GM12878 (cell line): ENCODE measurements at regions of chr2 and their contacts with region 1.

Region 1: GRCh38 chr2:30711646-30712085 is 95.6 kb downstream of the CAPN13 start:
- DNase-seq: peak; percentile 59
- ATAC-seq: peak; percentile 72
- H3K4me3 ChIP-seq: no peak overlapping the region
- H3K27ac ChIP-seq: no peak overlapping the region
- H3K4me1 ChIP-seq: peaks cover 13% of the 10 kb centered on the region
- H3K27me3 ChIP-seq: no peaks in the 10 kb centered on the region
- CTCF ChIP-seq: peak; percentile 100; a peak in 5 of 6 replicates
- EP300 ChIP-seq: no peak
- POLR2A ChIP-seq: no peak
- RAD21 ChIP-seq: peak; percentile 96

Region 2: DNA sequence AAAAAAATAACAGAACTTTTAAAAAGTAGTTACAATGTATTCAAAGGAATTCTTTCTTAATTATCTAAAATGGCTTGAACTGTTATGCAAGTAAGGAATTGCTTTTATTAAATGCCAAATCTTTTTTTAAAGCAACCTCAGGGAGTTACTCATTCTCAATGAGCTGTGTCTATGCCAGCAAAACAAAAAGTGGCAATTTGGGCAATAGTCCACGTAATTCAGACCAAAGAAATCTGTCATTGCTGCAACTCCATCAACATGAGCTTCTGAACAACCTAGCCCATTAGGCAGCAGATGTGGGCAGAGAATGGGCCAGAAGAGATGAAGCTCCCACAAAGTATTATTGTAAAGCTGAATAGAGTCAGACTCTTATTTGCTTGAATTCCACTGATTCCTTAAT is 908.7 kb before region 1 on chr2:
- CTCF ChIA-PET with region 1: no interaction called
- POLR2A ChIA-PET with region 1: no interaction called
- RAD21 ChIA-PET with region 1: no interaction called
- SMC1A ChIA-PET with region 1: no interaction called
- in situ Hi-C with region 1: no loop called
- intact Hi-C with region 1: no loop called
- DNase-seq: no peak
- ATAC-seq: no peak
- H3K4me3 ChIP-seq: no peak overlapping the region
- H3K27ac ChIP-seq: no peak overlapping the region
- H3K4me1 ChIP-seq: no peaks in the 10 kb centered on the region
- H3K27me3 ChIP-seq: no peaks in the 10 kb centered on the region
- CTCF ChIP-seq: no peak
- EP300 ChIP-seq: no peak
- POLR2A ChIP-seq: no peak
- RAD21 ChIP-seq: no peak

Region 3: DNA sequence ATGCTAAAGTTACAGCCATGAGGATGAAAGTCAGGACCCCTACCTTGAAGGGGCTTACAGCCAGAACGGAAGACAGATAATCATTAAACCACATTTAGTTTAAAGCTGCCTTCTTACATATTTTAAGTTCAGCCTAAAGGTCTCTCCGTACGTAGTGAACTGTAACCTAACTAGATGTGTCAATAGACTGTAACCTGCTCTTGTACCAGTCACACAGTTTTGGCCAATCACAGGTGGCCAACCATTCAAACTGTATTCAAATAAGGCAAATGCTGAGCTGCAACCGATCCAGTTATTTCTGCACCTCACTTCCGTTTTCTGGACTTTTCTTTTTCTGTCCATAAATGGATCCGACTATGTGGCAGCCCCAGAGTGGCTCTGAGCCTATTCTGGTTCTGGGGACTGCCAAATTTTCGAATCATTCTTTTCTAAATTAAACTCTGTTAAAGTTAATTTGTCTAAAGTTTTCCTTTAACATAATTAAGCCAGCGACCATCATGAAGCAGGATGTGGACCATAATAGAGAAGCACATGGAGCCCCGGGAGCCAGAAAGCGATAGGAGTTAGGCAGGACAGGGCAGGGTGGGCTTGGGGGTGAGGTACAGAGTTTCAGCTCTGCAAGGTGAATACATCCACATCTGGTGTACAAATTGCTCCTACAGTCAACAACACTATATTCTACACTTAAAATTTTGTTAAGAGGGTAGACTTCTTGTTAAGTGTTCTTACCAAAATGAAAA is 613.2 kb before region 1 on chr2:
- CTCF ChIA-PET with region 1: interaction called, 11 read pairs
- POLR2A ChIA-PET with region 1: no interaction called
- RAD21 ChIA-PET with region 1: no interaction called
- SMC1A ChIA-PET with region 1: interaction called, 3 read pairs
- in situ Hi-C with region 1: no loop called
- intact Hi-C with region 1: no loop called
- DNase-seq: no peak
- ATAC-seq: no peak
- H3K4me3 ChIP-seq: no peak overlapping the region
- H3K27ac ChIP-seq: no peak overlapping the region
- H3K4me1 ChIP-seq: no peaks in the 10 kb centered on the region
- H3K27me3 ChIP-seq: peaks cover 0 to 6% of the 10 kb centered on the region in 2 experiments; a peak in 1 of 4 replicates
- CTCF ChIP-seq: no peak
- EP300 ChIP-seq: no peak
- POLR2A ChIP-seq: no peak
- RAD21 ChIP-seq: no peak

Region 4: GRCh38 chr2:30178618-30179434 is 532.8 kb before region 1 on chr2:
- CTCF ChIA-PET with region 1: interaction called, 11 read pairs
- POLR2A ChIA-PET with region 1: no interaction called
- RAD21 ChIA-PET with region 1: interaction called, 6 read pairs
- SMC1A ChIA-PET with region 1: interaction called, 5 read pairs
- in situ Hi-C with region 1: no loop called
- intact Hi-C with region 1: no loop called
- DNase-seq: no peak
- ATAC-seq: no peak
- H3K4me3 ChIP-seq: no peak overlapping the region
- H3K27ac ChIP-seq: no peak overlapping the region
- H3K4me1 ChIP-seq: no peaks in the 10 kb centered on the region
- H3K27me3 ChIP-seq: no peaks in the 10 kb centered on the region; a peak in 1 of 4 replicates
- CTCF ChIP-seq: no peak
- EP300 ChIP-seq: no peak
- POLR2A ChIP-seq: no peak
- RAD21 ChIP-seq: no peak

Region 5: DNA sequence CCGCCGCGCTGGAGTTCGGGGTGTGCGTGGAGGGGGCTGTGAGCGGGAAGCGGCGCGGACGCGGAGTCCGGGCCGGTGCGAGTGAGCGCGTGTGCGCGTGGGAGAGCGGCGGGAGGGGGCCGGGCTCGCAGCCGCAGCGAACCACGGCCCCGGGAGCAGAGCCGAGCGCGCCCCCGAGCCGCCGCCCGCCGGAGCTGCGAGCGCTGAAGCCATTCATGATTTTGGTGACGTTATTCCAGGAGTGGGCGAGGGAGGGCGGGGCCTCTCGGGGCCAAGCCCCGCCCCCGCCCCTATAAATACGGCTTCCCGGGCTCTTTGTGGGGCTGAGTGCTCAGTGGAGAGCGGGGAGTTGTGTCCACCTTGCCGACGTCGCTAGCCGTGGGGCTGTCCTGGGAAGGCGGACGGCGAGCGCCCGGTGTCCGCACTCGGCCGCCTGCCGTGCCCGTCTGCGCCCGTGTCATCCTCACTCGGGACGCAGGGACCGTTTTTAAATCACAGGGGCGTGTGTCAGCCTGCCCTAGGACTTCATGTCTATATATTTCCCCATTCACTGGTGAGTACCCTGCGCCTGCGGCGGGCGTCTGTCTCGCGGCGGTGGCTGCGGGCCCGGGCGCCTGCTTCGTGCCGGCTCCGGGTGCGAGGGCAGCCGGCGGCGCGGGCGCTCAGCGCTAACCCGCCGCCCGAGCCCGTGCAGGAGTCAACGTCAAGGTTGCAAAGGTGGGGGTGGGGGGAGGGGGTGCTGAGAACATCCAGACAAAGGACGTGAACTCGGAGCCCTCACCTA is 480.3 kb before region 1 on chr2 and contains the start of gene LBH:
- CTCF ChIA-PET with region 1: interaction called, 14 read pairs
- POLR2A ChIA-PET with region 1: interaction called, 3 read pairs
- RAD21 ChIA-PET with region 1: interaction called, 11 read pairs
- SMC1A ChIA-PET with region 1: interaction called, 15 read pairs
- in situ Hi-C with region 1: no loop called
- intact Hi-C with region 1: no loop called
- DNase-seq: peak; percentile 56
- ATAC-seq: peak; percentile 59
- H3K4me3 ChIP-seq: peak within 1 kb of the TSS; percentile 80
- H3K27ac ChIP-seq: peak within 1 kb of the TSS; percentile 58
- H3K4me1 ChIP-seq: peaks cover 47% of the 10 kb centered on the region
- H3K27me3 ChIP-seq: no peaks in the 10 kb centered on the region
- CTCF ChIP-seq: peak in 1 of 3 experiments; percentile 31; a peak in 1 of 6 replicates
- EP300 ChIP-seq: peak in 1 of 2 experiments; percentile 27; a peak in 1 of 4 replicates
- POLR2A ChIP-seq: peak; percentile 99
- RAD21 ChIP-seq: peak; percentile 24; the same call in 1 of the 2 replicates
- polyA plus RNA-seq, gene LBH: 9.3 to 26.5 TPM

Region 6: DNA sequence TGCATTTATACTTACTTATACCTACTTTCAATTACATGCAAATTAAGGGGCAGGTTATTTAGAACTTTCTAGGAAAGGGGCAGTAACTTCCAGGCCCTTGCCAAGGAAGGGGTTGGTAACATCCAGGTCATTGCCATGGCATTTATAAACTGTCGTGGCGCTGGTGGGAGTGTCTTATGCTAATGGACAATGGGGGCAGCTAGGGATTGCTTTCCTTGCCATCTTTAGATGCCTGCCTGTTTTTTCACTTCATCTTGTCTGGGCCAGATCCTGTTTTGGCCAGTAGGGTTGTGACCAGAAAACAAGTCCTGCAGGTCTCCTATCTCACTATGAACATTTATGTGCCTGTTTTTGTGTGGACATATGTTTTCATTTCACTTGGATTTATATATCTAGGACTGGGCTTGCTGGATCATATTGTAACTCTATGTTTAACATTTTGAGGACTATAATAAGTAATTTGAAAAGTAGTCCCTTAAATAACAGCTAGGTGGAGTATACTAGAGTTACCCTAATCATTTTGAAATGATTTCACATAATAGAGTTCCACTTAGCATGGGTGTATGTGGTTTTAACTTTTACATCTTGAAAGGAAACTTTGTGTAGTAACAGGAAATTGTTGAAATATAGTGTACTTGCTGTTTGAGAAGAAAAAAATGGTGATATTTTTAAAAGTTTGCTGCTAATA is 208.5 kb before region 1 on chr2:
- CTCF ChIA-PET with region 1: interaction called, 10 read pairs
- POLR2A ChIA-PET with region 1: no interaction called
- RAD21 ChIA-PET with region 1: interaction called, 4 read pairs
- SMC1A ChIA-PET with region 1: interaction called, 6 read pairs
- in situ Hi-C with region 1: no loop called
- intact Hi-C with region 1: no loop called
- DNase-seq: no peak
- ATAC-seq: peak; percentile 66
- H3K4me3 ChIP-seq: no peak overlapping the region
- H3K27ac ChIP-seq: no peak overlapping the region
- H3K4me1 ChIP-seq: peaks cover 5% of the 10 kb centered on the region
- H3K27me3 ChIP-seq: no peaks in the 10 kb centered on the region
- CTCF ChIP-seq: no peak
- EP300 ChIP-seq: no peak
- POLR2A ChIP-seq: no peak
- RAD21 ChIP-seq: no peak; the same call in 1 of the 2 replicates

Region 7: DNA sequence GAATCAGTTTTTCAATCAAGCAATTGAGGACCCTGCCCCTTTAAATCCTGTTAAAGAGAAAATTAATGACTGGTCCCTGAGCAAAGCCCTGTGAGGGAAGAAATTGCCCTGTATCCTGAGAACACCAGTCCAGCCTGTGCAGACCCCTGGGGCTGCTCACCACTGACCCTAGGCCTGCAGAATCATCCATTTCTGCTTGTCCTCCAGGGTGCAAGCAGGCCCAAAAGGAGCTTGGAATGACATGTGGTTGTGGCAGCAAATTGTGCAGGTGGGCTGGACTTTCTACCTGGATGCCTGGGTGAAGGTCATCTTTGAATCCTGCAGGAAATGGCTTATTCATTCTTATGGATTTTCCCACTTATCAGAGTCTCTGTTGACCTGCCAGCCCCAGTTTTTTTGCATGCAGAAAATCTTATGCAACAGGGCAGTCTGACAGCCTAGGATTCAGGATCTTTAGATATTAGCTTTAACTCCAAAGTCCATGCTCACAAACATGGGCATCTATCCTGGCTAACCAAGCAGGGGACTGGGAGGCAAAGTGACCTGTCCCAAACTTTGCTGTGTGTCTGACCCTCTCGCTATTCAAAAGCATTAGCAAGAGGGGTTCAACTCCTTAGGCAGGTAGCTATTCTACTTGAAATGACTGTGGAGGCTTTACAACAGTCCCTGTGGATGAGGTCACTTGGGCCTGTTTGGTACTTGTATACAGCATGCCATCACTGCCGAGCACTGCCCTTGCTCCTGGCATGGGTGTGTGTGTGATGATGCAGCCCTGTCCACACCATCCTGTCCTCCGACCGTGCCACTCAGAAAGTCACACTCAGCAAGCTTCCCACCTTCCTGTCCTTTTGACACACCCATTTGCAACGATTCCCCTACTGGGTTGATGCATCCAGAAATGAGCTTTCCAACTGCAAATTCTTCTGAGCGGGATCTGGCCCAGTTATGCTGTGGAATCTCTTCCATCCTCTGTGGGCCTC is 10.3 kb after region 1 on chr2:
- CTCF ChIA-PET with region 1: interaction called, 20 read pairs
- POLR2A ChIA-PET with region 1: no interaction called
- RAD21 ChIA-PET with region 1: interaction called, 3 read pairs
- SMC1A ChIA-PET with region 1: interaction called, 3 read pairs
- in situ Hi-C with region 1: no loop called
- intact Hi-C with region 1: no loop called
- DNase-seq: no peak
- ATAC-seq: no peak
- H3K4me3 ChIP-seq: no peak overlapping the region
- H3K27ac ChIP-seq: no peak overlapping the region
- H3K4me1 ChIP-seq: no peaks in the 10 kb centered on the region
- H3K27me3 ChIP-seq: peaks cover 0 to 8% of the 10 kb centered on the region in 2 experiments
- CTCF ChIP-seq: no peak
- EP300 ChIP-seq: no peak
- POLR2A ChIP-seq: no peak
- RAD21 ChIP-seq: no peak

Region 8: DNA sequence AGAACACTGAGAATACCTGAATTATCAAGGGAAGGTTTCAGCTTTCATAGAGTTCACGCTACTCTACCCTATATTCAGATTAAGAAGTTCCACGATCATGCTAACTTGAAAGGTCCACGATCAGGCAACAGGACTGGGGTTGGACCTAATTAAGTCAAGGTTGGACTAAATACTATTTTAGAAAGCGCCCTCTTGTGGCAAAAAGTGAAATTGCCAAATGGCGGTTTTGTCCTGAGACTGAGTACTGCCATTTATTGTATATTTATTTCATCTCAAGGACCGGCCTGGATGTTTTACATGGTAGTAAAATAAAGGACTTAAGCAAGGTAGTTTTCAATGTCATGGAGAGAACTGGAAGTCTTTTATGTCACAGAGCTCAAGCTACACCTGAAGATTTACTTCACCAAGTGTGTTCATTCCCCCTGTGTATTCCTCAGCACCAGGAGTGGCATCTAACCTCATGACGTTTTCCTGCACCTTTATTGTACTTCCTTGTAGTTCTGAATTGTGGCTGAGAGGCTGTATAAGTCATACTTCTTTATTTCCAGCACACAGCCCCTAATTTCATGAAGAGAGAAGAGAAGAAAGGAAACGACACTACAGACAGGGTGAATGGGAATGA is 812.3 kb after region 1 on chr2:
- CTCF ChIA-PET with region 1: interaction called, 47 read pairs
- POLR2A ChIA-PET with region 1: interaction called, 4 read pairs
- RAD21 ChIA-PET with region 1: no interaction called
- SMC1A ChIA-PET with region 1: interaction called, 5 read pairs
- in situ Hi-C with region 1: loop called (anchors 5 kb)
- intact Hi-C with region 1: loop called (anchors 1 kb)
- DNase-seq: no peak
- ATAC-seq: peak; percentile 89
- H3K4me3 ChIP-seq: no peak overlapping the region
- H3K27ac ChIP-seq: no peak overlapping the region
- H3K4me1 ChIP-seq: no peaks in the 10 kb centered on the region
- H3K27me3 ChIP-seq: peaks cover 0 to 2% of the 10 kb centered on the region in 2 experiments; a peak in 3 of 4 replicates
- CTCF ChIP-seq: peak; percentile 64 to 74 (median 65)
- EP300 ChIP-seq: no peak
- POLR2A ChIP-seq: no peak
- RAD21 ChIP-seq: peak; percentile 48; the same call in 1 of the 2 replicates